ENCODE measurements at regions of chr1 and their contacts with region 1.

Region 1: DNA sequence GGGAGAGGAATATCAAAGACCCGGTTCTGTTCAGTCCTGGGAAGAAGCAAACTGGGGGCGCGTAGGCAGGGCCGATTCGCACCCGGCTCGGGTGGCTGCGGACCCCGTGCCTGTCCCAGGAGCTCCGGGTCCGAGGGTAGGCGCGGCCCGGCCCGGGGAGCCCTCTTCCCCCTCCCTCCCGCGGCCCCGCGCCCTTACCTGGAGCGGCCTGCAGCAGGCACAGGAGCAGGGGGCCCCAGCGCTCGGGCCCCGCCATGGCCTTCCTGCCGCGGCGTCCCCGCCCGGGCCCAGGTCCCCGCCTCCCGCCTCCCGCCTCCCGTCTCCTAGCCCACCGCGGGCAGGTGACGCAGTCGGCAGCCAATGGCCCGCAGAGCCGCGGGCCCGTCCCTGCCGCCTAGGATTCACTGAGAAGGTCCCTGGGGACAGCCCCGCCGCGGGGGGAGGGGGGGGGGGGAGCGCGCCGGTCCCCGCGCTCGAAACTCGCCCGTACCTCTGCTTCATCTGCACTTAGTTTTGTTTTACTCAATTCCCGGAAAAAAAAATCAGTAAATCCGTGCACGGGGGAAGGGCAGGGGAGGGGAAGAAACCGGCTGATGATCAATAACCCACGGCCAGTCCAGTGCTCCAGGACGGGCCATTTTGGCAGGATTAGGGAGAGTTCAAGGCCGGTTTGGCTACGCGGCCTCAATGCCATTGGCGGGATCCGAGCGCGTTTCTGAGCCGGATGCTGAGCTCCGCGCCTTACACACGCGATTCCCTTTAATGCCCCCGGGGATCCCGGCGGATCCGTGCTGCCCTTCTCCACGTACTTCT is at the start of gene IFNLR1:
- DNase-seq: no peak

Region 2: DNA sequence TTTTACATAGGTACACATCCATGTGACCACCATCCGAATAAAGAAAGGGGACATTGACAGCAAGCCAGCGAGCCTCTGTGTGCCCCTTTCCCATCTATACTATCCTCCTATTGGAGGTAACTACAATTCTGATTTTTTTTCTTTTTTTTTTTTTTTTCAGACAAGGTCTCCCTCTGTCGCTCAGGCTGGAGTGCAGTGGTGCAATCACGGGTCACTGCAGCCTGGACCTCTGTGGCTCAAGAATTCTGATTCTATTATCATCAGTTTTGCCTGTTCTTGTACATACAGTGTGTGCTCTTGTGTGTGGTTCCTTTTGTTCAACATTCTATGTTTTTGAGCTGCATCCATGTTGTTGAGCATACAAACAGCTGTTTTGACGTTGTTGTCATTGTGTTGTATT is 151.1 kb before region 1 on chr1:
- in situ Hi-C with region 1: no loop called
- DNase-seq: no peak

Region 3: DNA sequence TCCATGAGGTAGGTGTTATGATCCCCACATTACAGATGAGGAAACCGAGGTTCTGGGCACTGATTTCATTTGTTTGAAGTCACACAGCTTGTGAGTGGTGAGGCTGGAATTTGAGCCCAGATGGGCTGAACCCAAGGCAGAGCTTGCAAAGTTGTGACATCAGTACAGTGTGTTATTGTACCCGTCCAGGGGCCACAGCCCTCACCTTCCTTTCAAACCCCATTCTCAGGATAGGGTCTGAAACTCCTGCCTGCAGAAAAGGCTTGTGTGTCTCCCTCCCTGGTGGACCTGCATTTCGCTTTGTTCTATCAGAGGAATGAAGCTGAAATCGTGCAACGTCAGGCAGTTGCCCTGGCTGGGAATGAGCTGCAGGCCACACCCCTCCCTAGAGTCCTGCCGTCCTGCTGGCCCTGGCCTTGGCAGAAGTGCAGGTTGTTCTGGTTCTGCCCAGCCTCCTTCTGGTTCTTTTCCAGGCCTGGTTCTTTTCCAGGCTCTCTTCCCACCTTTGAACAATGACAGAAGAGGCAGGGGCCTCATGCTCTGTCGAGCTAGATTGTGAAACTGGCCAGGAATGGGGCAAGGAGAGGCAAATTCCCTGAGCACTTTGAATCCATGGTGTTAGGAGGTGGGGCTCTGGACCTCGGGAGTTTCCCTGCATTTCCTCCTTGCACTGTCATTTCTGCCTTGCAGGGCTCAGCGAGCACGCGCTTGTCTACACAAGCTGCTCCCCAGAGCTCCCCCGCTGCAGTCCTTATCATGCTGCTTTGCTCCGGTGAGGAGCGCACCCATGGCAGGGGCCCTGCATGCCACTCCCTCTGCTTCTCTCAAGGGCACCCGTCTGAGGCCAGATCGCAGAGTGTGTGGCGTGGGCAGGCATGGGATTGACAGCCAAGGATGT is 67.1 kb before region 1 on chr1:
- in situ Hi-C with region 1: loop called (anchors 10 kb)
- DNase-seq: no peak

Region 4: GRCh38 chr1:24289937-24290595 is 102.9 kb after region 1 on chr1:
- in situ Hi-C with region 1: no loop called
- DNase-seq: no peak

Region 5: GRCh38 chr1:24308365-24309015 is 121.3 kb after region 1 on chr1:
- in situ Hi-C with region 1: no loop called
- DNase-seq: no peak

Region 6: DNA sequence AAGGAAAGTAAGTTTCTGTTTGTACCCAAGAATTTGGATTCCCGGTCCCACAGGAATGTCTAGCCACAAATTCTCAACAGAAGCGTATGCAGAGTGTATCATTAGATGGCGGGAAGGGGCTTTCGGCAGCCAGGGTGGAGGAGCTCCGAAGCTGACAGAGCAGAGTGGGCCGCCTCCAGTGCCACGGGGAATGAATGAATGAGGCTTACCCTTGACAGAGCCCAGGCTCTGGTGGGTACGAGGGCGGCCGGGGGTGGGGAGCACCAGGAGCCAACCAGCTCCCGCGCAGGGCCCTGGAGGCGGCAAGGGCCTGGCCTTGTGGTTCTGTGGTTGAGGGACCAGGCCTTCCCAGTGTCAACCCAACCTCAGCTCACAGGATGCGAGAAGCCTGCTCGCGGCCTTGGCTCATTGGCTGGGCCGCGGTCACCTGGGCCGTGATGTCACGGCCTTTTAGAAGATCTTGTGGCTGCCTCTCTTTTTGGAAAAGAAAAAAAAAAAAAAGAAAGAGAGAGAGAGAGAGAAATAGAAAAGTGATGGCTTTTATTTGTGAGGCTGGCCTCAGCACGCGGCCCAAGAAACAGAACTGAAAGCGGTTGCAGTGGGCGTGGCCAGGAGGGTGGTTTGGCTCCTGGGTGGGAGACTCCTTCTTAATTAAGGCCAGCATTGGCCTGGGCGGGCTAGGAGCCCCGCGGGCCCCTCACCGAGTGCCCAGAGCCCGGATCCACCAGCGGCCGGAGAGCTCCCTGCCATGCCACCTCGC is 777.8 kb after region 1 on chr1:
- in situ Hi-C with region 1: no loop called
- DNase-seq: peak; percentile 51

Measured in KBM-7 (cell line).